ENCODE measurements at regions of chr17 and their contacts with region 1.

Region 1: DNA sequence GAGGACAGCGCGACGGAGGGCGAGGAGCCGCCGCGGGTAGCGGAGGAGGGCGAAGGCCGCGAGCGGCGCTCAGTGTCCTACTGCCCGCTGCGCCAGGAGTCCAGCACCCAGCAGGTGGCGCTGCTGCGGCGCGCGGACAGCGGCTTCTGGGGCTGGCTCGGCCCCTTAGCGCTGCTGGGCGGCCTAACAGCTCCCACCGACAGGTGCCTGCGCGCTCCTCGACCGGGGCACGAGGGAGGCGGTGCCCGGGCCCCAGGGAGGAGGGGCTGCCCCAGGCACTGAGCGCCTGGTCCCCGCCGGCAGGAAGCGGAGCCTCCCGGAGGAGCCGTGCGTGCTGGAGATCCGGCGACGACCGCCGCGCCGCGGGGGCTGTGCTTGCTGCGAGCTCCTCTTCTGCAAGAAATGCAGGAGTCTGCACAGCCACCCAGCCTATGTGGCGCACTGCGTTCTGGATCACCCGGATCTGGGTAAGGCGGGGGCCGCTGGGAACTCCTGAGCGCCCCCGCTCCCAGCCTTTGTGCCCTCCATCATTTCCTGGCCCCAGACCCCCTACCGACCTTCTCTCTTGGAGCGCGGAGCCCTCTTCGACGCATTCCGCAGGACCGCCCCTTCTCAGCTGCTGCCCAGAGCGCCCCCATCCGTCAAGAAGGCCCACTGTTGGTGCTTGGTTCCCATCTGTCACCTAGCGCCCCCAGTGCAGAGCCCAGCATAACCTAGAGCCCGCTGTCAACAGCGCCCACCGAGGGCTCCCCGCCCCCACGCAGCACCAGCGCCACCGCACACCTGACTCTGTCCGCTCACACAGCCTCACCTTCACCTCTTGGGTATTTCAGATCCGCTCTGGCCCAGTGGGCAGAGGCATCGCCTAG is 3.7 kb downstream of the C17orf50 start:
- DNase-seq: peak; percentile 60 to 91 (median 75)
- ATAC-seq: peak; percentile 85 to 92 (median 90)
- H3K4me3 ChIP-seq: peak overlapping the region; percentile 78 to 83
- H3K4me3 Mint-ChIP-seq: peak overlapping the region; percentile 83 to 94 (median 90)
- H3K27ac ChIP-seq: peak overlapping the region; percentile 57
- H3K27ac Mint-ChIP-seq: peak overlapping the region; percentile 58 to 83
- H3K4me1 ChIP-seq: peaks cover 0 to 17% of the 10 kb centered on the region in 2 experiments
- H3K4me1 Mint-ChIP-seq: peaks cover 8 to 11% (median 10%) of the 10 kb centered on the region in 3 donors
- H3K27me3 ChIP-seq: peaks cover 0 to 2% of the 10 kb centered on the region in 2 experiments
- H3K27me3 Mint-ChIP-seq: peaks cover 2 to 3% of the 10 kb centered on the region in 2 donors

Region 2: DNA sequence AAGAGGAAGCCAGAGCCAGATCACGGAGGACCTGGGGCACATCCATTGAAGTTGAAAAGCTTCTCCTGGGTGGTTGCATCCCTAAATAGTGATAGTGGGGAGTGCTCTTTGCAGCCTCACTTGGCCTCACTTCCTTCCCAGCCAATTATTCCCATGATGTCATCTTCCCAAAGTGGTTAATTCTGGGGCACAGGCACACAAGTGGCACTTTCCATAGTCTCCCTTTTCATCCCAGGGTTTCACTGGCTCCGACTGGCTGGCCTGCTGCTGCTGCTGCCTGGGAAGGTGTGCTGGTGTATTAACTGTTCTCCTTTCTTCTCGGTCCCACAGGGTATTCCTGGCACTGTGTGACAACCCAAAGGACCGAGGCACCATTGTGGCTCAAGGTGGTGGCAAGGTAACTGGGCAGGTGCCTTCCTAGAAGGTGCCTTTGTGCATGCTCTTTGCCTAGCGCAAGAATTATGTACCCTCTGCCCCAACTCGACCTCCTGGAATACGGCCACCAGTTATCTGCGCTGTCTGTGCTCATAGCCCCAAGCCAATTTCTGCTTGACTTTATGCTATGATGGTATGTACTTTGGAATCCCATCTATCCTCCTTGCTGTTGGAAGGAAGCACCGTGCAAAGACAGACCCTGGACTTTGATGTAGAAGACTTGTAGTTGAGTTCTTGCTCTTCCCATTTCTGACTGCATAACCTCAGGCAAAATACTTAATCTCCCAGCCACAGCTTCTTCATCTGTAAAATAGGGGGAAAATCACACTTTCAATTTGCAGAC is 588.5 kb before region 1 on chr17:
- CTCF ChIA-PET with region 1: interaction called in 1 of 2 experiments, 16 read pairs
- POLR2A ChIA-PET with region 1: no interaction called
- DNase-seq: peak in 1 of 35 experiments; percentile 10
- ATAC-seq: no peak
- H3K4me3 ChIP-seq: no peak overlapping the region
- H3K4me3 Mint-ChIP-seq: peak overlapping the region in 1 of 3 donors; percentile 26
- H3K27ac ChIP-seq: no peak overlapping the region
- H3K27ac Mint-ChIP-seq: peak overlapping the region; percentile 93 to 95
- H3K4me1 ChIP-seq: peaks cover 28 to 56% of the 10 kb centered on the region in 2 experiments
- H3K4me1 Mint-ChIP-seq: peaks cover 75 to 91% (median 82%) of the 10 kb centered on the region in 3 donors
- H3K27me3 ChIP-seq: no peaks in the 10 kb centered on the region
- H3K27me3 Mint-ChIP-seq: no peaks in the 10 kb centered on the region

Region 3: GRCh38 chr17:35791681-35792350 is 27.5 kb after region 1 on chr17:
- CTCF ChIA-PET with region 1: interaction called, 3 to 10 read pairs
- POLR2A ChIA-PET with region 1: interaction called in 1 of 2 experiments, 4 read pairs
- DNase-seq: no peak
- ATAC-seq: no peak
- H3K4me3 ChIP-seq: no peak overlapping the region
- H3K4me3 Mint-ChIP-seq: no peak overlapping the region
- H3K27ac ChIP-seq: no peak overlapping the region
- H3K27ac Mint-ChIP-seq: peak overlapping the region in 1 of 2 donors; percentile 53
- H3K4me1 ChIP-seq: peaks cover 0 to 19% of the 10 kb centered on the region in 2 experiments
- H3K4me1 Mint-ChIP-seq: peaks cover 36 to 41% (median 38%) of the 10 kb centered on the region in 3 donors
- H3K27me3 ChIP-seq: peaks cover 0 to 33% of the 10 kb centered on the region in 2 experiments
- H3K27me3 Mint-ChIP-seq: peaks cover 12 to 33% of the 10 kb centered on the region in 2 donors

Region 4: GRCh38 chr17:35808962-35809854 is 44.9 kb after region 1 on chr17 and contains the start of gene TAF15:
- CTCF ChIA-PET with region 1: interaction called, 8 to 75 read pairs
- POLR2A ChIA-PET with region 1: interaction called, 4 to 7 read pairs
- DNase-seq: peak; percentile 81 to 98 (median 95)
- ATAC-seq: peak; percentile 91 to 93 (median 92)
- H3K4me3 ChIP-seq: peak within 1 kb of the TSS; percentile 67 to 90
- H3K4me3 Mint-ChIP-seq: peak within 1 kb of the TSS; percentile 92 to 93 (median 93)
- H3K27ac ChIP-seq: peak within 1 kb of the TSS; percentile 84
- H3K27ac Mint-ChIP-seq: peak within 1 kb of the TSS; percentile 99
- H3K4me1 ChIP-seq: peaks cover 24 to 25% of the 10 kb centered on the region in 2 experiments
- H3K4me1 Mint-ChIP-seq: peaks cover 51 to 53% (median 53%) of the 10 kb centered on the region in 3 donors
- H3K27me3 ChIP-seq: no peaks in the 10 kb centered on the region
- H3K27me3 Mint-ChIP-seq: no peaks in the 10 kb centered on the region
- total RNA-seq, gene TAF15: 186 to 228 (median 201) TPM

Region 5: GRCh38 chr17:37191219-37191618 is 1426.9 kb after region 1 on chr17:
- CTCF ChIA-PET with region 1: no interaction called
- POLR2A ChIA-PET with region 1: no interaction called
- DNase-seq: no peak
- ATAC-seq: no peak
- H3K4me3 ChIP-seq: no peak overlapping the region
- H3K4me3 Mint-ChIP-seq: no peak overlapping the region
- H3K27ac ChIP-seq: no peak overlapping the region
- H3K27ac Mint-ChIP-seq: no peak overlapping the region
- H3K4me1 ChIP-seq: no peaks in the 10 kb centered on the region
- H3K4me1 Mint-ChIP-seq: no peaks in the 10 kb centered on the region
- H3K27me3 ChIP-seq: no peaks in the 10 kb centered on the region
- H3K27me3 Mint-ChIP-seq: no peaks in the 10 kb centered on the region

Measured in T-cell (primary cell).